ENCODE measurements at regions of chr3 and their contacts with region 1.

Region 1: DNA sequence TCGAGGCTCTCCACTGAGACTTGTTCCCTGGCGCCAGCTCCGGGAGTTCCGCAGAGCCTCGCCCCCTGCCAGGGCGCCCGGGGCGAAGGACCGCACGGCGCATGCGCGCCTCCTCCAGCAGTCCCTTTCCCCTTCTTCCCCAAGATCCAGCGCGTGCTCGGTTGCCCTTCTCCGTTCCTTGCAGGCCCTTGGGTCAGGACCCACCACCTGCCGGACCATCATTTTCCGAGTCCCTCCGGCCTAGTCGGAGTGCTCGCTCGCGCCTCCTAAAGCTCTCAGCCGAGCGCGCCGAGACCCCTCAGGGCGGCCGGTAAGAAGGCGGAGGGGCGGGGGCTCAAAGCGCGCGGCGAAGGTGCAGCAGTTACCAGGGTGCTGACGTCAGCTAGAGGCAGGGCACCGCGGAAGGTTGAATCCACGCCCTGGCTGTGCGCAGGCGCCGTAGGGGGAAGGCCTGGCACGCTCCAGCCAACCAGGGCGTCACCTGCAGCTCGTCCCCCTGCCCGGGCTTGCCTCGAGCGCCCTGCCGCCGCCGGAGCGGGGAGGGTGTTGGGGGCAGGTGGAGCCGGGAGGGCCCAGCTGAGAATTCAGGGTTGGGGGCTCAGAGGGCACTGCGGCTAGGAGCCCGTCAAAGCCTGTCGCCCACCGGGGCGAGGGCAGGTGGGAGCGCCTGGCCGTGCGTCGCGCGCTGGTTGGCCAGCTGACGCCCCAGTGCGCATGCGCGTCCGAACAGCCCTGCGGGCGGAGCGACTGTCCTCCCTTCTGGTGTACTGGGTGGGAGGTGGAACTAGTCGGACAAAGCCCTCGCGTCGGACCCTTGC is at the start of gene TCAIM:
- DNase-seq: peak; percentile 98
- ATAC-seq: peak; percentile 91
- H3K4me3 Mint-ChIP-seq: peak within 1 kb of the TSS; percentile 96
- H3K27ac Mint-ChIP-seq: peak within 1 kb of the TSS; percentile 97
- H3K4me1 Mint-ChIP-seq: peaks cover 22% of the 10 kb centered on the region
- H3K27me3 Mint-ChIP-seq: no peaks in the 10 kb centered on the region
- CTCF ChIP-seq: no peak
- total RNA-seq, gene TCAIM: 11.8 and 12.9 TPM in 2 replicates

Region 2: DNA sequence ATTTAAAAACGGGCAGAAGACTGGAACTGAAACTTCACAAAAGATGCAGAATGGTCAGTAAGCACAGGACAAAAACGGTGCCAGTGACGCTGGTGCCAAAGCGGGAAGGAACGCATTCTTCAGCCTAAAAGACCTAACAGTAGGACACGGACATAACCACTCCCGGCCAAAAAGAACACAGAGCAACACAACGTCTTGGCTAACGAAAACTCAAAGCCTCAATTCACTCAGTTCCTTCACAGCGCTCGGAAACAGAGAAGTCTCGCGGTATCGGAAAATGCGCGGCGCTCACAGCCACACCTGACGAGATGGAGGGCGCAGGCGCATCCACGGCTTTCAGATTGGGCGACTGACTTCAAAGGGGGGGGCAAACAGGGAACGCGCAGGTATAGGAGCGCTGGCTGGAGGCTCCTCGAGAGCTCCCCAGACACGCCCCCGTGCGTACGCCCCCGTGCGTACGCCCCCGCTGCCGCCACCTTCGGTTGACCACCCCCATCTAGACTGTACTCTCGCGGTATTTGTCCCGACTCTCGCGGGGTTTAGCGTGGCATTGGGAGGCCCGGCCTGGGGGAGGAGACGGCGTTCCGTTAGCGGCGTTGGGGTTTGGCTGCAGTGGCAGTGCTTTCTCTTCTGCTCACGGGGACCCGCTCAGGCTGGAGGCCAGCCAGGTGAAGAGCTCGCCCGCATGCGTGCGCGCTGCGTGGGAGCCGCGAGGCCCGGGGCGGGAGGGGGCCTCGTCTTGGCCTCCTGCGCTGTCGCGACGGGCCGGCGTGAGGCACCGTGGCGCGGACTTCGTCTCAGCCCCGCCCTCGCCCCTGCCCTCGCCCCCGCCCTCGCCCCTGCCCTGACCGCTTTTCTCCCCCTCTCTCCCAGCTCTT is 1737.9 kb before region 1 on chr3 and contains the start of gene NKTR:
- CTCF ChIA-PET with region 1: no interaction called
- POLR2A ChIA-PET with region 1: no interaction called
- intact Hi-C with region 1: loop called (anchors 10 kb)
- DNase-seq: peak; percentile 98
- ATAC-seq: peak; percentile 92
- H3K4me3 Mint-ChIP-seq: peak within 1 kb of the TSS; percentile 91
- H3K27ac Mint-ChIP-seq: peak within 1 kb of the TSS; percentile 96
- H3K4me1 Mint-ChIP-seq: peaks cover 34% of the 10 kb centered on the region
- H3K27me3 Mint-ChIP-seq: no peaks in the 10 kb centered on the region
- CTCF ChIP-seq: no peak
- total RNA-seq, gene NKTR: 107 and 126 TPM in 2 replicates

Region 3: DNA sequence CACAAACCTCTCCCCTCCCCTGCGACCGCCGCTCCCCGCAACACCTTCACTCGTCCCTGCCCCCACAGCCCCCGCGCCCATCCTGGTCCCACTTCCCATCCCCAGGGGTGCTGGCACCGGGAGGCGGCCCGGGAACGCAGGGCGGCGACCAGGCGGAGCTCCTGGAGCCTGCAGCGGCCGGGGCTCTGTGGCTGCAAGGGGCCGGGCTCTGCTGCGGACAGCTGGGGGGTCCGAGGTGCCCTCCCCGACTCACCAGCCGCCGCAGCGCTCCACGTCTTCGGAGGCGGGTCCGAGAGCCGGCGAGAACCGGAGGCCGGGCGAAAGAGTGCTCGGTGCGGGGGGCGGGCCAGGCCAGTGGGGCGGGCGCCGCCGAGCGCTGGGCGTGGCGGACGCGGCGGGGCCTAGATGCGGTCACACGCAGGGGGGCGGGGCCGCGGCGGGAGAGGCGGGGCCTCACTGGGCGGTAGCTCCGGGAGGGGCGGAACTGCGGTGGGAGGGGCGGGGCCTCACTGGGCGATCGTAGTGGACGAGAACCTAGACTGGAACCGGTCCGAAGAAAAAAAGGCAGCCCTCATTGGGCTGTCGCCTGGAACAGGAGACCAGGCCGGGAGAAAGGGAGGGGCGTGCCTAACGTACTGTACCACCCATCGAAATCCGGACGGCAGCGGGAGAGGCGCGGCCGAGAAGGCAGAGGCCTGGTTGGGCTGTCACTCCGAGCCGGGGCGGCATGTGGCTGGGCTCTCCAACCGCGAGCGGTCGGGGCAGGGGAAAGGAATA is 716.4 kb before region 1 on chr3 and contains the start of gene ANO10:
- CTCF ChIA-PET with region 1: no interaction called
- POLR2A ChIA-PET with region 1: interaction called, 6 read pairs
- intact Hi-C with region 1: loop called (anchors 1 kb)
- DNase-seq: peak; percentile 98
- ATAC-seq: peak; percentile 91
- H3K4me3 Mint-ChIP-seq: peak within 1 kb of the TSS; percentile 88
- H3K27ac Mint-ChIP-seq: peak within 1 kb of the TSS; percentile 77
- H3K4me1 Mint-ChIP-seq: peaks cover 13% of the 10 kb centered on the region
- H3K27me3 Mint-ChIP-seq: peaks cover 1% of the 10 kb centered on the region
- CTCF ChIP-seq: no peak
- total RNA-seq, gene ANO10: 6.4 and 8.1 TPM in 2 replicates

Region 4: GRCh38 chr3:44045476-44046275 is 292.5 kb before region 1 on chr3:
- CTCF ChIA-PET with region 1: no interaction called
- POLR2A ChIA-PET with region 1: no interaction called
- intact Hi-C with region 1: no loop called
- DNase-seq: peak; percentile 66
- ATAC-seq: peak; percentile 95
- H3K4me3 Mint-ChIP-seq: peak overlapping the region; percentile 7
- H3K27ac Mint-ChIP-seq: peak overlapping the region; percentile 84
- H3K4me1 Mint-ChIP-seq: peaks cover 70% of the 10 kb centered on the region
- H3K27me3 Mint-ChIP-seq: no peaks in the 10 kb centered on the region
- CTCF ChIP-seq: no peak

Region 5: DNA sequence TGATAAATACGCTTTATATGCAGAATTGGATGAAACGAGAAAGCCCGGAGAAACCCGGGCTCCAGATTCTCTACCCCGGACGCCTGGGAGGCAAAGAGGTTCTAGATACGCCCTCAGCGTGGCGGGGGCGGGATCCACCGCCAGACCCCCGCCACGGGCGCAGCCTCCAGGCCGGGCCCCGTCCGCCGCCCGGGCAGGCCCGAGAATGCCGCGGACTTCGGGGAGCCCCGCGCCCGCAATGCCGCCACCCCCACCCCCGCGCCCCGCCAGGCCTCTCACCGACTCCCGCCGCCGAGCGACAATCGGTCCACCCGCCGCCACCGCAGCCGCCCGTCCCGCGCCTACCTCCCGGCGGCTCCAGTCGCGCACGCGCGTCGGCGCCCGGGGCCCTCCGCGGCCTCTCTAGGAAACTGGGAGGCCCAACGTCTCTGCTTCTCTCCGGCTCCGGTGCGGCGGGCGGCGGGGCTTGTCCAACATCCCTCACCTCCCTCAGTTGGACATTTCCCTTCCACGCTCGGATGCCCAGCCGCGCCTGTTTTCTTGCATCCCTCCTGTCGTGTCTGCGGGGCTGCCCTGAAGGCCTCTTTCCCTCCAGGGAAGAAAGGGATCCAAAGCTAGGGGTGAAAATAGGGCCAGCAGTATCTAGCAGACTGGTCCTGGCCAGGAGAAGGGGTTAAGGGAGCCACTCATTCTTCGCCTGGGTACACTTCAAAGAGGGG is 139.3 kb after region 1 on chr3 and contains the start of gene ZNF445:
- CTCF ChIA-PET with region 1: no interaction called
- POLR2A ChIA-PET with region 1: interaction called, 5 read pairs
- intact Hi-C with region 1: loop called (anchors 1 kb)
- DNase-seq: peak; percentile 76
- ATAC-seq: peak; percentile 94
- H3K4me3 Mint-ChIP-seq: peak within 1 kb of the TSS; percentile 91
- H3K27ac Mint-ChIP-seq: peak within 1 kb of the TSS; percentile 61
- H3K4me1 Mint-ChIP-seq: peaks cover 25% of the 10 kb centered on the region
- H3K27me3 Mint-ChIP-seq: no peaks in the 10 kb centered on the region
- CTCF ChIP-seq: no peak
- total RNA-seq, gene ZNF445: 17.3 and 19.5 TPM in 2 replicates

Region 6: GRCh38 chr3:44685128-44685800 is 347.0 kb after region 1 on chr3:
- CTCF ChIA-PET with region 1: no interaction called
- POLR2A ChIA-PET with region 1: no interaction called
- intact Hi-C with region 1: loop called (anchors 1 kb)
- DNase-seq: peak; percentile 56
- ATAC-seq: peak; percentile 92
- H3K4me3 Mint-ChIP-seq: peak overlapping the region; percentile 96
- H3K27ac Mint-ChIP-seq: peak overlapping the region; percentile 76
- H3K4me1 Mint-ChIP-seq: peaks cover 19% of the 10 kb centered on the region
- H3K27me3 Mint-ChIP-seq: peaks cover 23% of the 10 kb centered on the region
- CTCF ChIP-seq: no peak

Region 7: GRCh38 chr3:44761424-44762169 is 423.4 kb after region 1 on chr3 and contains the starts of genes KIAA1143 and KIF15:
- CTCF ChIA-PET with region 1: no interaction called
- POLR2A ChIA-PET with region 1: interaction called, 9 read pairs
- intact Hi-C with region 1: loop called (anchors 1 kb)
- DNase-seq: peak; percentile 96
- ATAC-seq: peak; percentile 96
- H3K4me3 Mint-ChIP-seq: peak within 1 kb of the TSS; percentile 89
- H3K27ac Mint-ChIP-seq: peak within 1 kb of the TSS; percentile 85
- H3K4me1 Mint-ChIP-seq: peaks cover 25% of the 10 kb centered on the region
- H3K27me3 Mint-ChIP-seq: no peaks in the 10 kb centered on the region
- CTCF ChIP-seq: no peak
- total RNA-seq, gene KIAA1143: 35.4 and 43.6 TPM in 2 replicates
- total RNA-seq, gene KIF15: 2.4 and 3.1 TPM in 2 replicates

Region 8: DNA sequence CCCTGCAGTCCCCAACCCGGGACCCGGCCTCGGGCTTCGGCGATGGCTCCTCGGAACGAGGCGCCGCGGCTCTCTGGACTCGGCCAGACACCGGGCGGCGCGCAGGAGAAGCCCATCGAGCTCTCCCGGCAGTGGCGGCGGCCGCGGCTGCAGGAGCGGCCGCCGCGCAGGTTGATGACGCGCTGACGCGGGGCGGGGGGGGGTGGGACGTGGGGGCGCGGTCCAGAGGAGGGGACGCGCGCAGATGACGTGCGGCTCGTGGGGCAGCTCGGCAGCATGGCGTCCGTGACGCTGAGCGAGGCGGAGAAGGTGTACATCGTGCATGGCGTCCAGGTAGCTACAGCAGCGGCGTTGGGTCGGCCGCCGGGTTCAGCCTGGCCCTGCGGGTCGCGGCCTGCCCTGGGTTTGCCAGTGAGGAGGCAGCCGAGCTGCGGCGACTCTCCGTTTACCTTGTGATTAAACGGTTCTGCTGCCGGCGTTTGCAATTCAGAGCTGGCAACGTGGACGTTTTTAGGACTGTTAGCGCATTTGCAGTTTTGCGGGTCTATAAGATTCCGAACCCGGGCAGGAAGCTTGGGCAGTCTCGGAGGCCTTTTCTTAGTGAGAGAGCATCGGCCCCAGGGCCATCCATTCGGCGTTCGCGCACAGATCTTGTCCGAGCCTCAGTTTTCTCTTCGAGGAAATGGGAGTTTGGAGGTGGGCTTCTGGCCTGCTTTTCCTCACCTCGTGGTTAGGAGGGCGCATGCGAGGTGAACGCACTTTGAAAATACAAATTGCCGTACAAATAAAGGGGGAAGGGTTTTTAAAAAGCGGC is 638.0 kb after region 1 on chr3 and contains the starts of genes EXOSC7 and ZDHHC3:
- CTCF ChIA-PET with region 1: no interaction called
- POLR2A ChIA-PET with region 1: interaction called, 17 read pairs
- intact Hi-C with region 1: loop called (anchors 2 kb)
- DNase-seq: peak; percentile 76
- ATAC-seq: peak; percentile 94
- H3K4me3 Mint-ChIP-seq: peak within 1 kb of the TSS; percentile 93
- H3K27ac Mint-ChIP-seq: peak within 1 kb of the TSS; percentile 88
- H3K4me1 Mint-ChIP-seq: peaks cover 49% of the 10 kb centered on the region
- H3K27me3 Mint-ChIP-seq: no peaks in the 10 kb centered on the region
- CTCF ChIP-seq: no peak
- total RNA-seq, gene EXOSC7: 42.5 and 44.0 TPM in 2 replicates
- total RNA-seq, gene ZDHHC3: 38.5 and 43.4 TPM in 2 replicates